ENCODE measurements at regions of chr2 and their contacts with region 1.

Region 1: DNA sequence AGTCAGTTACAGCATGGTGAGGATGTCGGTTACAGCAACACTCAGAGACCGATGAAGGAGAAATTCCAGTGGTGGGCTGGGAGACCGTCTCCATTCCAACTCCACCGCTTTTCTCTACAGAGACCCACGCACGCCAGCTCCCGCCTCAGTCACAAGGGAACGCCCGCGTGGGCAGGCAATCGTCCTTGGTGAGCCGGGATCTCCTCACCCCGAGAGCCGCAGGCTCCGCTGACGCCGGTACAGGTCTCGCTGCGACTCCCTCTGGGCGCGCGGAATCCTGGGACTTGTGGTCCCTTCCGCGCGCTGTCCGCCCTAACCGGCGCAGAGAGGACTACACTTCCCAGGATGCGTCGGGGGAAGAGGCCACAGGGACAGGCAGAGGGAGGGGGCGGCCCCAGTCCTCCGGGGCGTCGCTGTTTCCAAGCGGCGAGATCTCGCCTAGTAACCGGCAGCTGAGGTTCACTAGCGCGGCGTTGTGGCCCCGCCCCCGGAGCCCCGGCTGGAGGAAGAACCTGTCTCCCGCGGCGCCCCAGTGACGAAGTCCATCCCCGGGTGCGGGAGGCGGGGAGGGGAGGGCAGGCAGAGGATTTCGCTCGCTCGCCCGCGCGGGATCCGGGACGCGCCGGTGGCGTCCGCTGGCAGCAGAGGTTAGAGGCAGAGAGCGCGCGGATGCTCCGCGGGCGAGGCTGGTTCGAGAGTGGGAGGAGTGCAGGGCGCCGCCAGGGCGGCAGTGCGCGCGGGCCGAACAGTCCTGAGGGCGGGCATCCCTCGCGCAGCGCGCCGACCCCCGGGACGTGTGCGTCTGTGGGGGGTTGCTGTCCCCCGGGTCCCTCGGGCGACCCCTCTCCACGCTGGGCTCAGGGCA is at the start of gene EML6:
- DNase-seq: peak; percentile 97
- ATAC-seq: peak; percentile 95
- H3K4me3 Mint-ChIP-seq: peak within 1 kb of the TSS; percentile 95
- H3K27ac Mint-ChIP-seq: peak within 1 kb of the TSS; percentile 74
- H3K4me1 Mint-ChIP-seq: peaks cover 26% of the 10 kb centered on the region
- H3K27me3 Mint-ChIP-seq: peaks cover 9% of the 10 kb centered on the region
- CTCF ChIP-seq: no peak
- total RNA-seq, gene EML6: 25.3 and 31.5 TPM in 2 replicates

Region 2: DNA sequence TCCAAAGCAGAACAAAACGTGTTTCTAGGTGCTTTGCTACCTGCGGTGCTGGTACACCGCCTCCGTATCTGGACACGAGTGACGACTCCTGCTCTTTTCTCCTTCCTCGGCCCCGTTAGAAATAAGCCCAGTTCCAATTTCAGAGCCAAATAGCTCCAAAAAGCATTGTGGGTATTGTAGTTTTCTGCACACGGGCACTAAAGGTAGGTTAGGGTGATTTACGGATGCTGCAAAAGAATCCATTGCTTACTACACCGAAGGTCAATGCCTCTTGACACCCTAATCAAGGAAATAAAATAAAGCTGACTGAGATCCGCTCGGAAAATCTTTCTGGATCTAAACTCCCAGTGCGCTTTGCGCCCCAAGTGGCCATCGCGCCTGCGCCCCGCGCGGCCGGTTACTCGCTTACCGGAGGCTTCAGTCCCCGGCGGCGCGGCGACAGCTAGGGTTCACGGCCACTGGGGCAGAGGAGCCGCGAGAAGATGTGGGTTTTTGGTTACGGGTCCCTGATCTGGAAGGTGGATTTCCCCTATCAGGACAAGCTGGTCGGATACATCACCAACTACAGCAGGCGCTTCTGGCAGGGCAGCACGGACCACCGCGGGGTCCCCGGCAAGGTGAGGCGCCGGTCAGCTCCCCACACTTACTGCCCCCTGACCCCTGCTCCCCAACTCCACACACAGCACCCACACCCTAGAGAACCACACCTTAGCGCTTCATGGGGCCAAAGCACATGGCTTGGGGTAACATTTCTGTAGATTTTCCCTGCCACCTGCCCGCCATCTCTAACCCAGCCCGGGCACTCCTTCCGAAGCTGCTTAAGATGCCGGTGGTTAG is 955.7 kb before region 1 on chr2 and contains the start of gene CHAC2:
- CTCF ChIA-PET with region 1: no interaction called
- POLR2A ChIA-PET with region 1: interaction called, 3 read pairs
- intact Hi-C with region 1: loop called (anchors 1 kb)
- DNase-seq: peak; percentile 82
- ATAC-seq: peak; percentile 92
- H3K4me3 Mint-ChIP-seq: peak within 1 kb of the TSS; percentile 95
- H3K27ac Mint-ChIP-seq: peak within 1 kb of the TSS; percentile 99
- H3K4me1 Mint-ChIP-seq: peaks cover 21% of the 10 kb centered on the region
- H3K27me3 Mint-ChIP-seq: no peaks in the 10 kb centered on the region
- CTCF ChIP-seq: no peak
- total RNA-seq, gene CHAC2: 7.0 and 7.6 TPM in 2 replicates

Region 3: DNA sequence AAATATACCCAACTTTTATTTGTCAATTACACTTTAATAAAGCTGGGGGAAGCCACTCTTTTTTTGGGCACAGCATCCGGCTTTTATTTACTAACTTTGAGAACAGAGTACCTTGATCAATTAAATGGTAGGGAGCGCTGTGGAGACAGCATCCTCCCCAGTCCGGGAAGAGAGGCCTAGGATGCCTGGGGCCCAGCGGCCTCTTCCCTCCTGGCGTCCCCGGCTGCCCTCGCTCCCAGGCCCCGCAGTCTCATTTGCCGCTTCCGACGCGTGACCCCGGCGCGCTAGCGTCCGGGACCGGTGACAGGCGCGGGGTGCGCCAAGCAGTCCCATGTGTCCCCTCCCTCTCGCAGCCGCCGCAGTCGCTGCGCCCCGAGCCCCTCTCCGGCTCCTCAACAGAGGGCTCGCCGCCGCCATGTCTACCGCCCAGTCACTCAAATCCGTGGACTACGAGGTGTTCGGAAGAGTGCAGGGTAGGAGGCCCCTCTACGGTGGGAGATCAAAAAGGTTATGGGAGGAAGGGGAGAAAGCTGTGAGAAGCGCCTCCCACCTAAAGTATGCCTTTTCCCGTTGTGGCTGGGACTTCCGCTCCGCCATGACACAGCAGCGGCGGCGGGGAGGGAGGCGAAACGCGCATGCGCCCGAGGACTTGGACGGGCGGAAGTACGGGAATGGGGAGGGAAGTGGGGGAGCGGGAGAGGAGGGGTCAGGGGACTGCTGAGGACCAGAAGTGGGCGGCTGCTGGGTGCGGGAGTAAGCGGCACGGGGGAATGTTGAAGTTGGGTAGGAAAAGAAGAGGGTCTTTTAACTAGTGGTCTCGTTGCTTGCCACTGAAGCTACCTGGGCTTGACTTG is 607.9 kb before region 1 on chr2 and contains the start of gene ACYP2:
- CTCF ChIA-PET with region 1: no interaction called
- POLR2A ChIA-PET with region 1: interaction called, 5 read pairs
- intact Hi-C with region 1: loop called (anchors 5 kb)
- DNase-seq: peak; percentile 89
- ATAC-seq: peak; percentile 84
- H3K4me3 Mint-ChIP-seq: peak within 1 kb of the TSS; percentile 97
- H3K27ac Mint-ChIP-seq: peak within 1 kb of the TSS; percentile 100
- H3K4me1 Mint-ChIP-seq: peaks cover 26% of the 10 kb centered on the region
- H3K27me3 Mint-ChIP-seq: no peaks in the 10 kb centered on the region
- CTCF ChIP-seq: no peak
- total RNA-seq, gene ACYP2: 14.9 and 15.9 TPM in 2 replicates

Region 4: DNA sequence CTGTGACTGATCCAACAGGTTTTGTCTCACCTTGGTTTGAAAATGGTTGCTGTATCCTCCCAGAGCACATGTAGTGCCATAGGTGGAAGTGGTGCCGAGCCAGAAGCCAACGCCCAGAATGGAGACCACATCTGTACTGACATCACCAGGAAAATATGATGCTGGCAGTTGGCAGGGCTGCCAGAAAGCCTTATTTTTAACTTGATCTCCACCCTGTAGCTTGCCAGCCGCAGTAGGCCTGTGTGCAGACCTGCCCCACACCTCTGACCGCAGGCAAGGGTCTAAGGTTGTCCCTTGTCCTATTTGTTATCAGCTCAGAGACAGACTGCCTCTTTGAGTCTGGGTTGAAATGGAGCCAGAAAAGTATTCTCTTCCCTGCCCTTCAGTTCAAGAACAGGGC is 123.4 kb before region 1 on chr2:
- CTCF ChIA-PET with region 1: no interaction called
- POLR2A ChIA-PET with region 1: no interaction called
- intact Hi-C with region 1: no loop called
- DNase-seq: no peak
- ATAC-seq: no peak
- H3K4me3 Mint-ChIP-seq: no peak overlapping the region
- H3K27ac Mint-ChIP-seq: no peak overlapping the region
- H3K4me1 Mint-ChIP-seq: peaks cover 91% of the 10 kb centered on the region
- H3K27me3 Mint-ChIP-seq: no peaks in the 10 kb centered on the region
- CTCF ChIP-seq: no peak

Region 5: DNA sequence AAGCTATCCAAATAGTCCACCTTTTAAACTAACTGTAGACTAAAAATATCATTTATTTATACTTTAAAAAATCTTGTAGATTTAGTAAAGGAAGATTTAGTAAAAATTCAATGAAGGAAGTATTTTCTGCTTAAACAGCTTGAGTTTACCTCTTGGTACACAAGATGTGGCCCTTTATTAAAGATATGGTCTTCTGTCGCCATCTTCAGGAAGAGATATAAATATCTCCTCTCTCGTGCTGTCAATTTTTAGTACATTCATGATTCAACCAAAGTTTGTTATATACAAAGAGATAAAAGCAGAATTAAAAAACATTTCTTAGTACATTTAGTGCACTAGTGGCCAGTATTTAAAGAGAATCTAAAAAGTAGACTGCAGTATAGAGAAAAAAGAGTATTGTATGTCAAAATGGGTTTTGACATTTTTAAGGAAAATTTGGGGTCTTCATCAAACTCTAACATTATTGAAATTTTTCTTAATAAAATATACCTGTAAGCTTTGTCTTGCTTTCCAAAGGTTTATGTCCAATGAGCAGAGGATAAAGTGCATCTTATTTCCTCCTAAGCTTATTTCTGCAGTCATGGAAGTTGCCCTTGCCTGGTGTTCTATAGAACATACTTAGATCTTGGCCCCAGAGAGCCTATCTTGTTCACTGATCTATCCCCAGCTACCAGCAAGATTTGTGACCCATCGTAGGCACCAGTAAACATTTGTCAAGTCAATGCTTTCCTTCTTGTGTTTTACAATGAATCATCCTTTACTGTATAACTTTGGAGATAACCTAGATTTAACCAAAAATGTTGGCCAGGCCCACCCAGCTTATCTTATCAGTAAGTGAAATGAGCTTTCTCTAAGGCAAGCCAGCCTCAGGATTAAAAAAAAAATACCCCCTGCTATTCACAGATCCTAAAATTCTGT is 18.4 kb before region 1 on chr2:
- CTCF ChIA-PET with region 1: interaction called, 4 read pairs
- POLR2A ChIA-PET with region 1: interaction called, 6 read pairs
- intact Hi-C with region 1: loop called (anchors 1 kb)
- DNase-seq: no peak
- ATAC-seq: peak; percentile 51
- H3K4me3 Mint-ChIP-seq: no peak overlapping the region
- H3K27ac Mint-ChIP-seq: no peak overlapping the region
- H3K4me1 Mint-ChIP-seq: peaks cover 8% of the 10 kb centered on the region
- H3K27me3 Mint-ChIP-seq: peaks cover 8% of the 10 kb centered on the region
- CTCF ChIP-seq: no peak

Region 6: DNA sequence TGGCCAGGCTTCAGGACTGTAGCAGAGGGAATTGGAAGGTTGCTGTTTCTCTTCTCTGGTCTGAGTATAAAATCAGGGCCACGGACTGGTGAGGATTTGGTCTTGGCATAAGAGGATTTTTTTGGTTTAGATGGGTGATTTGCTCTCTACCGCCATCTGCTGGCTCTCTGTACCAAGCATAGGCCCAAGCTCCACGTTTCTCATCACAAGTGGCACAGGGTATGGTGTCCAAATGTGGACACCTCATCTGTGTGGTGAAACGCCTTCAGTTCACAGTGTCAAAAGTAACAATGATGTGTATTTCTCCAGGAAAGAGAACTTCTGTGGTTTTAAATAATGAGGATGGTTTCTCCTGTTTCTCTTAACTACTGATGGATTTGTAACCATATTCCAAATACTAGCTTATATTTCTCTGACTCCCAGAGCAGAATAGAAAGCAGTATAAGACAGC is 115.2 kb after region 1 on chr2:
- CTCF ChIA-PET with region 1: interaction called, 5 read pairs
- POLR2A ChIA-PET with region 1: interaction called, 4 read pairs
- intact Hi-C with region 1: loop called (anchors 1 kb)
- DNase-seq: peak; percentile 27
- ATAC-seq: peak; percentile 91
- H3K4me3 Mint-ChIP-seq: no peak overlapping the region
- H3K27ac Mint-ChIP-seq: no peak overlapping the region
- H3K4me1 Mint-ChIP-seq: peaks cover 4% of the 10 kb centered on the region
- H3K27me3 Mint-ChIP-seq: no peaks in the 10 kb centered on the region
- CTCF ChIP-seq: peak; percentile 58

Region 7: DNA sequence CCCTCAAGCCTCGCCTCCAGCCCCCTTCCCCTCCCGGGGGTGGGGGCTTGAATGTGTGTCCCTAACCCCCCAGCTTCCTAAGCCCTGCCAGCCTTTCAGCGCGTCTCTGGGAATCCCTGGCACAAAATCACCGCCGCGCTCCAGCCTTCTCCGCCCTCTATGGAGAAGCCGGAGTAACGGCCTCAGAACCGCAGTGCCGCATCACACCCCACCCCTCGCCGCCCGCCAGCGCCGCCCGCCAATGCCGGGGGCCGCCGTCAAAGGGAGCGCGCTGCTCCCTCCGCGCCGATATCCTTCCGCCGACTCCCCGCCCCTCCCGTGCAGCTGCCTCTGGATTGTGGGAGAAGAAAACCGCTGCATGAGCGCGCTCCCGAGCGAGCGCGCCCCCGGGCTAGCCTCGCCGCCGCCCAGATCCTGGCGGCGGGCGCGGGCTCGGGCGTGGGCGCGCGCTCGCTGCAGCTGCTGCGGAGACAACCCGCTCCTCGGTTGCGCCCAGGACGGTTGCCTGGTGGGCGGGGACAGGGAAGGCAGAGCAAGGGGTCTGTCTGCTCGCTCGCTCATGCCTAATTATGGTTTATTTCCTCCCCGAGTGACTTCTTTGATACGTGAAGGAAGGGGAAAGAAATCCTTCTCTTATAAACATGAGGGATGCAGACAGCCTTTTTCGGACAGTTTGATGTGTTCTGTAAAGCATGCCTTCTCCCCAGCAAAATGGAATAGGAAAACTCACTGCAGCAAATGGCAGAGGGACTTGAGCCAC is 696.5 kb after region 1 on chr2 and contains the start of gene CCDC88A:
- CTCF ChIA-PET with region 1: no interaction called
- POLR2A ChIA-PET with region 1: no interaction called
- intact Hi-C with region 1: loop called (anchors 1 kb)
- DNase-seq: peak; percentile 86
- ATAC-seq: peak; percentile 87
- H3K4me3 Mint-ChIP-seq: peak within 1 kb of the TSS; percentile 95
- H3K27ac Mint-ChIP-seq: peak within 1 kb of the TSS; percentile 92
- H3K4me1 Mint-ChIP-seq: peaks cover 46% of the 10 kb centered on the region
- H3K27me3 Mint-ChIP-seq: no peaks in the 10 kb centered on the region
- CTCF ChIP-seq: no peak
- total RNA-seq, gene CCDC88A: 25.6 and 35.6 TPM in 2 replicates

Measured in activated B cell treated with CpG ODN at 0.5 μM for 24 hours (primary cell).